Left ventricle myocardium inferior (tissue), 1 donor: ENCODE measurements at regions of chr13 and their contacts with region 1.

Region 1: GRCh38 chr13:51202477-51203046 is 19.6 kb upstream of the FAM124A start:
- DNase-seq: no peak
- H3K4me3 ChIP-seq: no peak overlapping the region
- H3K27ac ChIP-seq: no peak overlapping the region
- H3K4me1 ChIP-seq: no peaks in the 10 kb centered on the region
- H3K27me3 ChIP-seq: peaks cover 13% of the 10 kb centered on the region
- CTCF ChIP-seq: no peak

Region 2: DNA sequence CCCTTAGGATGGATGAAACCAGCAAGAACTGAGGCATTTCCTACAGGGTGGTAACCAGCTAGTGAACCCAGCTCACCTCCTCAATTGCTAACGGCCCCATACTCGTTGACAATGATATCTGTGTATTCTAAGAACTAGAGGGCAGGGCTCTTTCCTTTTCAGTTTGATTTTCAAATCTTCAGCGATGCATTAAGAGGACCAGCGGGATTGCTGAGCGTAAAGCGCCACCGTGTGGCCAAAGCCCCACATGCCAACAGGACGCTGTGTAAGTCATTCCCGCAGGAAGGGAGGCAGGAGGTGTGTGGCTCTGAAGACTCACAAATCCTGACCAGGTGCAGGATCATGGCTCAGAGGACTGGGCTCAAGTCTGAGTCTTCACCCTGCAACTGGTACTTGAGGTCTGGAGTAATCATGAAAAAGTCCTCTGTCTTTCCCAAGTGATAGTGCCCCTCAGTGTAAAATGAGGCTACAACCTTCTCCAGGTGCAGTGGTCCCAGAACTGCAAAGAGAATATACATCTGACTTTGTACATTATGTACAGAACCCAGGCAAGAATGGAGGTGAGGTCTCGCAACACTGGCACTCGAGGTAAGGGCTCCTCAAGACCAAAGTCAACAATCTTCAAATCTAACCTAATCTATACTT is 132.4 kb before region 1 on chr13:
- intact Hi-C with region 1: no loop called
- DNase-seq: peak; percentile 85
- H3K4me3 ChIP-seq: no peak overlapping the region
- H3K27ac ChIP-seq: no peak overlapping the region
- H3K4me1 ChIP-seq: peaks cover 37% of the 10 kb centered on the region
- H3K27me3 ChIP-seq: peaks cover 4% of the 10 kb centered on the region
- CTCF ChIP-seq: peak; percentile 94

Region 3: GRCh38 chr13:51134763-51135365 is 67.7 kb before region 1 on chr13:
- intact Hi-C with region 1: loop called (anchors 10 kb)
- DNase-seq: no peak
- H3K4me3 ChIP-seq: no peak overlapping the region
- H3K27ac ChIP-seq: no peak overlapping the region
- H3K4me1 ChIP-seq: no peaks in the 10 kb centered on the region
- H3K27me3 ChIP-seq: peaks cover 4% of the 10 kb centered on the region
- CTCF ChIP-seq: no peak